Colonic mucosa (tissue), 4 donors: ENCODE measurements at regions of chr20 and their contacts with region 1.

Region 1: GRCh38 chr20:45095753-45096371 is 5.1 kb downstream of the KCNS1 start:
- DNase-seq: peak; percentile 57
- H3K4me3 ChIP-seq: no peak overlapping the region
- H3K27ac ChIP-seq: no peak overlapping the region
- H3K4me1 ChIP-seq: no peaks in the 10 kb centered on the region
- H3K27me3 ChIP-seq: peaks cover 26% of the 10 kb centered on the region
- CTCF ChIP-seq: peak; percentile 65

Region 2: DNA sequence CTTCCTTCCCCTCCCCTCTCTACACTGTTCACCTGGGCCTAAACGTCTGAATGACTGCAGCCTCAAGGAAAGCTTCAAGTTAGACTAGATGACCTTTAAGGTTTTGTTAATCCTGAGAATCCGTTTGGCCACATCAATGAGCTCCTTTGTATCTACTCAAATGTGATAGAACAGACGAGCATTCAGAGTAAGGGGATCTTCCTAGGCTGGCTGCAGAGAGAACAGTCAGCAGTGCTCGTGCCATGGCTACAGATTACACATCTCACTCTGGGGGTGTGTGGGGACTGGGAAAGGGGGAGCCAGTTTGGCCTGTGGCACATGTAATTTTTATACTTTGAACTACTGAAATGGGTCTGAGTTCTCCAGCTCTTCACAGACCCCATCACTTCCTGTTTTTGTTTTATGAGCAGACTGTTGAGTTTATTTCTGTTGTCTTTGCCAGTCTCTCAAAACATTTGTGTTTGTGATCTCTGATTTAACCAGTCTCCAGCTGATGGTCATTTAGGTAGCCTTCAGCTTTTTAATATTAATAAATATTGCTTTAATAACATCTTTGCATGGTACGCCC is 45.9 kb before region 1 on chr20:
- intact Hi-C with region 1: loop called (anchors 5 kb)
- DNase-seq: no peak
- H3K4me3 ChIP-seq: no peak overlapping the region
- H3K27ac ChIP-seq: no peak overlapping the region
- H3K4me1 ChIP-seq: no peaks in the 10 kb centered on the region
- H3K27me3 ChIP-seq: no peaks in the 10 kb centered on the region
- CTCF ChIP-seq: no peak

Region 3: GRCh38 chr20:45163083-45163803 is 67.4 kb after region 1 on chr20:
- intact Hi-C with region 1: no loop called
- DNase-seq: peak; percentile 86
- H3K4me3 ChIP-seq: no peak overlapping the region
- H3K27ac ChIP-seq: peak overlapping the region; percentile 53
- H3K4me1 ChIP-seq: no peaks in the 10 kb centered on the region
- H3K27me3 ChIP-seq: no peaks in the 10 kb centered on the region
- CTCF ChIP-seq: no peak

Region 4: DNA sequence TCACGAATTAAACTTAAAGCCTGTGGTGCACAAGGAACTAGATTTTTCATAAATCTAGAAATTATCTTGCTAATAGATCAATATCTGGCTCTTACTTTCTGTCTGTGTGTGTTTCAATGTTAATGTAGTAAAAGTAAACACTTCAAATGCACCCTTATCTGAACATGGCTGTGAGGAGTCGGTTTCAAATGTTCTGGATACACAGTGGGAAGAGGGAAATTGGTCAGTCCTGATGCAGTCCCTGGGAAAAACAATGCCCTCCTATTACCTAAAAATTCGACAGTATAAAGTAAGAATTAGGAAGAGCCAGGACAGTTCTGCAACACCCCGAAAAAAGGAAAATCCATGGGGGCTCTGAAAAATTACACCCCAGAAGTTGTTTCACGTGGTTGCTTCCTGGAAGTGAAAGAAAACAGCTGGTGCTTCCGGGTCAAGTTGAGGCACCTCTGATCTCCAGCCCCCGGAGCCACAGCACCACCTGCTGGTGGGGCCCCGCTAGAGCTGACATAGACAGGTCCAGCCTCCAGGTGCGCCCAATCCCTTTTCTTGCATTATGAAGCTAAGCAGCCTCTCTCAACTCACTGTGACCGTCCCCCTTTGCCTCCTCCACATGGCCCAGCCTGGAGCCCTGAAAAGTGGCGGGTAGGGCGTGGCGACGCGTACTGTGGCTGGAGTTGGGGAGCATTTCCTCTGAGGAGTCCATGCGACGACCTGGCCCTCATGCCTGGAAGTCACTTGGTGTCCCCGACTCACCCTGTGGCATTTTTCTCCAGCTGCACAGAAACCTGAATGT is 133.6 kb after region 1 on chr20:
- intact Hi-C with region 1: loop called (anchors 5 kb)
- DNase-seq: peak; percentile 88
- H3K4me3 ChIP-seq: no peak overlapping the region
- H3K27ac ChIP-seq: no peak overlapping the region
- H3K4me1 ChIP-seq: no peaks in the 10 kb centered on the region
- H3K27me3 ChIP-seq: no peaks in the 10 kb centered on the region
- CTCF ChIP-seq: peak; percentile 73